ENCODE measurements at regions of chr11 and their contacts with region 1.

Region 1: DNA sequence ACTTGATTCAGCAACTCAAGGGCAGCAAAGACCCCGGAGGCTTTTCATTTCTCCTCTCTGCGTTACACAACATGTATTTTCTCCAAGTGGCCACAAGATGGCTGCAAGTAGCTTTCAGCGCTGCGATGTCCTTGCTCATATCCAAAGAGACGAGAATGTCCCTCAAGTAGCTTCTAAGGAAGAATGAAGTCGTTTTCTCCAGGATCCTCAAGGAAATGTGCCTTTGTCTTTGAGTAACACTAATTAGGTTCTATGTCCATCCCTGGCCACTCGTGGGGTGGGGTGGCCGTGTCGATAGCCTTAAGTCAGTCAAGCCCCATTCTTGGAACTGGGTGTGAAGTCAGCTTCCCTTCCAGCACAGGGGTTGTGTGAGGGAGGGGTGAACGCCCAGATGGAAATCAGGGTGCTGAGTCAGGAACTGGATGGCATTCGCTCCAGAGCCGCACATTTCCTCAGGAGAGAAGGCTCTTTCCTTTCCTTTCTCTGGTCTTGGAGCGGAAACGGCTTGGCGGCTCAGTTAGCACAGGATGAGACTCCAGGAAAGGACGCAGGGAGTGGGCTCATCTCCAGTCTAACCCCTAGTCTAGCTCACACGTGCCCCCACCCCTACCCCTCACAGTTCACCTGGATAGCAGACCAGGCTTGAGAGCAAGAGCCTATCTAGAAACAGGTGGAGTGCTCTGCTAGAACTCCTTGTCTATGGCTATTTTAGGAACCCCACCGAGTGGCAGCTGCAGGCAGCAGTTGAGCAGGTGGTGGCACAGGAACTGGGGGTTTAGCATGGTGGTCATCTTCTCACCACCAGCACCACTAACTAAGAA is 44.3 kb downstream of the NNMT start:
- DNase-seq: peak; percentile 41
- H3K4me3 Mint-ChIP-seq: no peak overlapping the region
- H3K27ac Mint-ChIP-seq: no peak overlapping the region
- H3K4me1 Mint-ChIP-seq: peaks cover 3% of the 10 kb centered on the region
- H3K27me3 Mint-ChIP-seq: no peaks in the 10 kb centered on the region

Region 2: DNA sequence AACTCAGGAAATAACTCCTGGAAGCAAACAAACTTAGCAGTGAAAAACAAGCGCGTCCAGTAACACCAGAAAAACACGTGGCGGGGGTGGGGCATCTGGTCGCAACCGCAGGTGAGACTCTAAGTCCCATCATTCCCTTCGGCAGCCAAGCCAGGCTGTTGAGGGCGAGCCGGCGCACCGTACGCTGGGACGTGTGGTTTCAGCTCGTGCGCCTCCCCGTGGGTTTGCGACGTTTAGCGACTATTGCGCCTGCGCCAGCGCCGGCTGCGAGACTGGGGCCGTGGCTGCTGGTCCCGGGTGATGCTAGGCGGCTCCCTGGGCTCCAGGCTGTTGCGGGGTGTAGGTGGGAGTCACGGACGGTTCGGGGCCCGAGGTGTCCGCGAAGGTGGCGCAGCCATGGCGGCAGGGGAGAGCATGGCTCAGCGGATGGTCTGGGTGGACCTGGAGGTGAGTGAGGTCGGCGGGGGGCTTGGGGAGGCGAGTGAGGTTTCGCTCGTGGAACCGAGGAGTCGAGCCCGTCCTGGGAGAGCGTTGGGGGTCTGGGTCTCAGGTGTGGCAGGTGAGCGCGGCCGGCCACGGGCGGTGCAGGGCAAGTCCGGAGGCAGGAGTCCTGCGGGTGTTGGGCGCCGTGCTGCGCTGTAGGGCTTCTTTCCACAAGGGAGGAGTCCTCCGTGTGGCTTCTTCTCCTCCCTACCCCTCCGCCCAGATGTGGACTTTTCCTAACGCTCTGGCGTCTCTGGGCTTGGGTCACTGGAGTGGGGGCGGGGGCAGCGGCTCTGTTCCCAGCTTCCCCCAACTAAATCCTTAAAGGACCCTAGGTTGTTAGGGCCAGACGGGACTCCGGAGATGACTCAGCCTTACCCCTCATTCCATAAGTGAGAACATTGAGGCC is 99.0 kb after region 1 on chr11 and contains the start of gene REXO2:
- CTCF ChIA-PET with region 1: interaction called, 4 read pairs
- POLR2A ChIA-PET with region 1: no interaction called
- intact Hi-C with region 1: loop called (anchors 2 kb)
- DNase-seq: peak; percentile 96
- H3K4me3 Mint-ChIP-seq: peak within 1 kb of the TSS; percentile 97
- H3K27ac Mint-ChIP-seq: peak within 1 kb of the TSS; percentile 85
- H3K4me1 Mint-ChIP-seq: peaks cover 31% of the 10 kb centered on the region
- H3K27me3 Mint-ChIP-seq: no peaks in the 10 kb centered on the region
- total RNA-seq, gene REXO2: 60.1 to 62.0 TPM

Region 3: DNA sequence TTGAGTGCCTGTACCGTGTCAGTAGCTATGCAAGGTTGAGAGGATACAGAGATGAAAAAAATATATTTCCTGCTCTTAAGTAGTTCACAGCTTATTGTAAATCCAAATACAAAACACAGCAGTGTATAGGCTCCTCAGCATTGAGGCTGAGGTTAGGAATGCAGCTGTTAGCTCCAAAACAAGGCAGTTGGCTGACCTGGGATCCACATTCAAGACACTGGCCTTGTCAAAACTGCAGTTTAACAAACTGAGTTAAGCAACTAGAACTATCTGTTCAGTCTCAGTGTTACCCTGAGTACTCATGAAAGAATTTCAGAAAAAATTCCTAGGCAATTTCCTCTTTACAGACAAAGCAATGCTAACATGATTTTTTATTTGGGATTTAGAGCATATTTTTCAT is 141.6 kb after region 1 on chr11:
- CTCF ChIA-PET with region 1: no interaction called
- POLR2A ChIA-PET with region 1: no interaction called
- intact Hi-C with region 1: no loop called
- DNase-seq: no peak
- H3K4me3 Mint-ChIP-seq: no peak overlapping the region
- H3K27ac Mint-ChIP-seq: no peak overlapping the region
- H3K4me1 Mint-ChIP-seq: no peaks in the 10 kb centered on the region
- H3K27me3 Mint-ChIP-seq: peaks cover 1% of the 10 kb centered on the region

Region 4: GRCh38 chr11:114604179-114604813 is 263.8 kb after region 1 on chr11:
- CTCF ChIA-PET with region 1: no interaction called
- POLR2A ChIA-PET with region 1: no interaction called
- intact Hi-C with region 1: loop called (anchors 5 kb)
- DNase-seq: no peak
- H3K4me3 Mint-ChIP-seq: no peak overlapping the region
- H3K27ac Mint-ChIP-seq: no peak overlapping the region
- H3K4me1 Mint-ChIP-seq: no peaks in the 10 kb centered on the region
- H3K27me3 Mint-ChIP-seq: no peaks in the 10 kb centered on the region

Region 5: DNA sequence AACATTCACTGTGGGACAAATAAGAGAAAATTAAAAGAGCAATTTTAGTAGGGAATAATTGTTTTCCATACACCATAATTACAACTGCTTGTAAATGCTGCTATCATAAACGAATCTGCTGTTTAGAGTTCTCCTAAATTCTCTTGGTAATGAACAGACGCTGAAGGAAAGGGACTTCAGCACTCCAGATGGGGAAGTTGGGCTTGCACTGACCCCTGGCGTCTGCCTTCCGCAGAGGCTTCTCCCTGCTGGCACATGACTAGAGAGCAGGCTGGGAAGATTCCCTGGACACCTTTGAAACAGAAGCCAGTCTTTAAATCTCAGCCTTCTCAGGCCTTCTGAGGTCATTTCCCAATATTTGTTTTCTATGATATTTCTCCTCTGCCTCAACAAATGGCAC is 421.9 kb after region 1 on chr11:
- CTCF ChIA-PET with region 1: no interaction called
- POLR2A ChIA-PET with region 1: no interaction called
- intact Hi-C with region 1: loop called (anchors 2 kb)
- DNase-seq: peak; percentile 24
- H3K4me3 Mint-ChIP-seq: no peak overlapping the region
- H3K27ac Mint-ChIP-seq: no peak overlapping the region
- H3K4me1 Mint-ChIP-seq: no peaks in the 10 kb centered on the region
- H3K27me3 Mint-ChIP-seq: peaks cover 4% of the 10 kb centered on the region